H1 (cell line): ENCODE measurements at regions of chr3 and their contacts with region 1.

Region 1: GRCh38 chr3:42507761-42508335 is 5.4 kb downstream of the VIPR1 start:
- DNase-seq: no peak
- H3K4me3 ChIP-seq: no peak overlapping the region
- H3K27ac ChIP-seq: no peak overlapping the region
- H3K4me1 ChIP-seq: peaks cover 0 to 11% (median 2%) of the 10 kb centered on the region in 4 experiments; a peak in 3 of 7 replicates
- H3K27me3 ChIP-seq: peaks cover 0 to 9% (median 7%) of the 10 kb centered on the region in 4 experiments; a peak in 4 of 7 replicates
- CTCF ChIP-seq: no peak
- EP300 ChIP-seq: no peak
- POLR2A ChIP-seq: no peak
- RAD21 ChIP-seq: no peak

Region 2: GRCh38 chr3:42518800-42519567 is 11.1 kb after region 1 on chr3:
- CTCF ChIA-PET with region 1: interaction called, 19 read pairs
- POLR2A ChIA-PET with region 1: interaction called, 10 read pairs
- DNase-seq: peak in 1 of 2 experiments; percentile 85
- H3K4me3 ChIP-seq: no peak overlapping the region
- H3K27ac ChIP-seq: no peak overlapping the region
- H3K4me1 ChIP-seq: no peaks in the 10 kb centered on the region
- H3K27me3 ChIP-seq: no peaks in the 10 kb centered on the region
- CTCF ChIP-seq: peak; percentile 65 to 80 (median 69)
- EP300 ChIP-seq: no peak
- POLR2A ChIP-seq: no peak
- RAD21 ChIP-seq: peak; percentile 60 to 71